Ovary (tissue), 10 donors: ENCODE measurements at regions of chr3 and their contacts with region 1.

Region 1: DNA sequence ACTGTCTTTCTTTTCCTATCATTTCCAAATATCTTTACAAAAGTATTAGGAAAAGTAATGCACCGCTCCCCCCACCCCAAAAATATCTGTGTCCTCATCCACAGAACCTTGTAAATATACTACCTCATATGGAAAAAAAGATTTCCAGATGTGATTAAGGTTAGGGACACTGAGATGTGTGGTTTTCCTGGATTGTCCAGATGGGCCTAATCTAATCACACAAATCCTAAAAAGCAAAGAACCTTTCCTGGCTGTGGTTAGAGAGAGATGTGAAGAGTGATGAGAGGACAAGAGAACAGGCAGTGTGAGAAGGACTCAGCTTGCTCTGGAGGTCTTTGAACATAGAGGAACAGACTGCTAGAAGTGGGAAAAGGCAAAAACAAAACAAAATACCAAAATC is 77.7 kb downstream of the ROBO1 start:
- DNase-seq: no peak
- H3K4me3 ChIP-seq: no peak overlapping the region
- H3K27ac ChIP-seq: no peak overlapping the region
- H3K4me1 ChIP-seq: no peaks in the 10 kb centered on the region
- H3K27me3 ChIP-seq: peaks cover 3% of the 10 kb centered on the region
- CTCF ChIP-seq: no peak
- EP300 ChIP-seq: no peak
- POLR2A ChIP-seq: no peak

Region 2: GRCh38 chr3:80914854-80915253 is 1224.8 kb after region 1 on chr3:
- intact Hi-C with region 1: loop called in 1 of 4 experiments (anchors 10 kb)
- DNase-seq: no peak
- H3K4me3 ChIP-seq: no peak overlapping the region
- H3K27ac ChIP-seq: no peak overlapping the region
- H3K4me1 ChIP-seq: no peaks in the 10 kb centered on the region
- H3K27me3 ChIP-seq: peaks cover 2% of the 10 kb centered on the region
- CTCF ChIP-seq: no peak
- EP300 ChIP-seq: no peak
- POLR2A ChIP-seq: no peak